Activated CD4-positive, alpha-beta T cell treated with anti-CD3 and anti-CD28 coated beads for 36 hours (primary cell): ENCODE measurements at regions of chr18 and their contacts with region 1.

Region 1: GRCh38 chr18:9575558-9575957 is 38.8 kb downstream of the PPP4R1 start:
- DNase-seq: peak; percentile 57
- ATAC-seq: no peak
- H3K4me3 Mint-ChIP-seq: no peak overlapping the region
- H3K27ac Mint-ChIP-seq: no peak overlapping the region
- H3K4me1 Mint-ChIP-seq: no peaks in the 10 kb centered on the region
- H3K27me3 Mint-ChIP-seq: no peaks in the 10 kb centered on the region

Region 2: DNA sequence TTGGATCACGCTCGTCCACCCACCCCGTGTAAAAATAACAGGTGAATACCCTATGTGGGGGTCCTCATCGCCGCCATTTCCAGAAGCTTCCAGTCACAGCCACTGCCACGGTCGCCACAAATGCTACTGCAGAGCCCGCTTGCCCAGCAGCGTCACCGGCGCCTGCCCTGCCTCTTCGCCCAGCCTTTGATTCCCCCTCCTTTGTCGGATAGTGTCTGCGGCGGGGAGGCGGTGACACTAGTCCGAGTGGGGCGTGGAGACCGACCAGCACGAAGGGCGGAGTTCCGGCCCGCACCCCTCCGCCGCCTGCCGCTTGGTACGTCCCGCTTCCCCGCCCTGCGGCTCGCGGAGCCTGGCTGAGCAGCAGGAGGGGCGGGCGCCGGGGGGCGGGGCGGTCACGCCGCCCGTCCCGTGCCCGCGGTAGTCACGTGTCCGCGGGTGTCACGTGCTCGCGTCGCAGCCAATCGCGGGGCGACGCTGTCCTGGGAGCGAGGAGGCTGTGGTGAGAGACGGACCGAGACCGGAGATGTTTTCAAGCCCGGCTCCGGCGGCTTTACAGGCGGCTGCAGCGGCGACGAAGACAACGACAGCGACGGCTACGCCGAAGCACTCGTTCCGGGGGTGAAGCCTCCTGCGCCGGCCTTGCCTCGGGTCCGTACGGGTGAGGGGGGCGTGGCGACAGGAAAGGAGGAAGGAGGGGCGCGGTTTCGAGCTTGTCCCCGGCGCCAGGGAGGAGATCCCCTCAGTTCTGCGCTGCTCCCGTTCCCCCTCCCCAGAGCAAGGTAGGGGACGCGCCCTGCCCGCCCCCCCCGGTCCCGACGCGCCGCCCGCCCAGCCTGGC is 439.0 kb before region 1 on chr18 and contains the start of gene ANKRD12:
- CTCF ChIA-PET with region 1: no interaction called
- POLR2A ChIA-PET with region 1: no interaction called
- intact Hi-C with region 1: no loop called
- DNase-seq: peak; percentile 98
- ATAC-seq: peak; percentile 75
- H3K4me3 Mint-ChIP-seq: peak within 1 kb of the TSS; percentile 86
- H3K27ac Mint-ChIP-seq: peak within 1 kb of the TSS; percentile 97
- H3K4me1 Mint-ChIP-seq: peaks cover 53% of the 10 kb centered on the region
- H3K27me3 Mint-ChIP-seq: no peaks in the 10 kb centered on the region
- total RNA-seq, gene ANKRD12: 57.5 to 96.0 TPM

Region 3: GRCh38 chr18:9565407-9565806 is 10.2 kb before region 1 on chr18:
- CTCF ChIA-PET with region 1: interaction called, 16 read pairs
- POLR2A ChIA-PET with region 1: no interaction called
- intact Hi-C with region 1: no loop called
- DNase-seq: no peak
- ATAC-seq: no peak
- H3K4me3 Mint-ChIP-seq: no peak overlapping the region
- H3K27ac Mint-ChIP-seq: no peak overlapping the region
- H3K4me1 Mint-ChIP-seq: no peaks in the 10 kb centered on the region
- H3K27me3 Mint-ChIP-seq: no peaks in the 10 kb centered on the region

Region 4: GRCh38 chr18:9771261-9771976 is 195.9 kb after region 1 on chr18:
- CTCF ChIA-PET with region 1: interaction called, 3 read pairs
- POLR2A ChIA-PET with region 1: no interaction called
- intact Hi-C with region 1: loop called in 1 of 2 experiments (anchors 2 kb)
- DNase-seq: peak; percentile 80
- ATAC-seq: peak; percentile 79
- H3K4me3 Mint-ChIP-seq: no peak overlapping the region
- H3K27ac Mint-ChIP-seq: no peak overlapping the region
- H3K4me1 Mint-ChIP-seq: no peaks in the 10 kb centered on the region
- H3K27me3 Mint-ChIP-seq: peaks cover 10% of the 10 kb centered on the region